ENCODE measurements at regions of chr22 and their contacts with region 1.

Region 1: DNA sequence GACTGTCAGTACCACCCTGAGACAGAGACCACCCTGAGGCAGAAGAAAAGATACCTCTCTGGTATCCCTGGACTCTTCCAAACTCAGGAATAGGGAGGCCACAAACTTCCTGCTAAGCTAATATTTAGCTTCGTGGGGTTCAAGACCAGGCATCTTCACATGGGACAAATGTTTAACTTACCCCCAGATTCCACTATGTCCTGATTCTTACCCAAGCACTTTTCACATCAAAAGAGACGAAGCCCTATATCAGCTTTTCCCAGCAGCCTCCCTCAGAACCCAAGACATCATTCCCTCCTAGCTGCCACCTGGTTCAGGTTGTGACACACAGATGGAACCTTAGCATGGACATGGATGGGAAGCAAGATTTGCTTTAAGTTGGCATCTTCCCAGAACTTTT is 32.1 kb downstream of the SMC1B start:
- DNase-seq: no peak
- H3K4me3 Mint-ChIP-seq: no peak overlapping the region
- H3K27ac Mint-ChIP-seq: no peak overlapping the region
- H3K4me1 Mint-ChIP-seq: no peaks in the 10 kb centered on the region
- H3K27me3 Mint-ChIP-seq: peaks cover 2% of the 10 kb centered on the region
- CTCF ChIP-seq: no peak

Region 2: GRCh38 chr22:45201678-45202332 is 179.5 kb before region 1 on chr22:
- CTCF ChIA-PET with region 1: interaction called, 10 read pairs
- intact Hi-C with region 1: no loop called
- DNase-seq: no peak
- H3K4me3 Mint-ChIP-seq: no peak overlapping the region
- H3K27ac Mint-ChIP-seq: no peak overlapping the region
- H3K4me1 Mint-ChIP-seq: peaks cover 10% of the 10 kb centered on the region
- H3K27me3 Mint-ChIP-seq: no peaks in the 10 kb centered on the region
- CTCF ChIP-seq: no peak

Region 3: GRCh38 chr22:45366713-45367112 is 14.6 kb before region 1 on chr22:
- CTCF ChIA-PET with region 1: no interaction called
- intact Hi-C with region 1: no loop called
- DNase-seq: no peak
- H3K4me3 Mint-ChIP-seq: no peak overlapping the region
- H3K27ac Mint-ChIP-seq: no peak overlapping the region
- H3K4me1 Mint-ChIP-seq: no peaks in the 10 kb centered on the region
- H3K27me3 Mint-ChIP-seq: peaks cover 53% of the 10 kb centered on the region
- CTCF ChIP-seq: no peak

Region 4: DNA sequence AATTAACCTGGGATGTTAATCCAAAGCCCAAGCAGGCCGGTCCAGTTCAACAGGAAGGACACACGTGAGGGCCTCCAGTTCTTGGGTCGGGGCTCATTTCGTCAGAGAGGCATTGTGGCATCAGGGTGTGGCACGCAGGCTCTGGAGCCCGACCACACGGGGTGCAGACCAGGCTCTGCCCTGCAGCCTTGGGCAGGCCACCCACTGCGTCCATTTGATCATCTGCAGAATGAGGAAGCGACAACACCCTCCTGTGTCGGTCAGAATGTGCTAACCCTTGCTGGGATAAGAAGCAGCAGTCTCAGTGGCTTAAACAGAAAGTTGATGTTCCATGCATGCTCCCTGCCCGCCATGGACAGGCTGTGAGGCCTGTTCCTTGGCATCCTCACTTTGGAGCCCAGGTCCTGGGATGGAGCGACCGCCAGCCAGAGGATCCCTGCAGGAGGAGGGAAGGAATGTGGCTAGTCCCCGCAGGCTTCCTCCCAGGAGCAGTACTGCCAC is 42.9 kb after region 1 on chr22:
- CTCF ChIA-PET with region 1: no interaction called
- intact Hi-C with region 1: no loop called
- DNase-seq: peak; percentile 30
- H3K4me3 Mint-ChIP-seq: no peak overlapping the region
- H3K27ac Mint-ChIP-seq: no peak overlapping the region
- H3K4me1 Mint-ChIP-seq: no peaks in the 10 kb centered on the region
- H3K27me3 Mint-ChIP-seq: peaks cover 17% of the 10 kb centered on the region
- CTCF ChIP-seq: no peak

Measured in Calu3 (cell line).